Adrenal gland (tissue), 19 donors: ENCODE measurements at regions of chr20 and their contacts with region 1.

Region 1: GRCh38 chr20:32521780-32522525 is 63.2 kb downstream of the NOL4L start:
- DNase-seq: peak; percentile 56 to 87 (median 76)
- H3K4me3 ChIP-seq: no peak overlapping the region
- H3K27ac ChIP-seq: no peak overlapping the region
- H3K4me1 ChIP-seq: peaks cover 9 to 45% of the 10 kb centered on the region in 2 donors
- H3K27me3 ChIP-seq: no peaks in the 10 kb centered on the region
- CTCF ChIP-seq: peak; percentile 74 to 93 (median 88)
- POLR2A ChIP-seq: no peak

Region 2: DNA sequence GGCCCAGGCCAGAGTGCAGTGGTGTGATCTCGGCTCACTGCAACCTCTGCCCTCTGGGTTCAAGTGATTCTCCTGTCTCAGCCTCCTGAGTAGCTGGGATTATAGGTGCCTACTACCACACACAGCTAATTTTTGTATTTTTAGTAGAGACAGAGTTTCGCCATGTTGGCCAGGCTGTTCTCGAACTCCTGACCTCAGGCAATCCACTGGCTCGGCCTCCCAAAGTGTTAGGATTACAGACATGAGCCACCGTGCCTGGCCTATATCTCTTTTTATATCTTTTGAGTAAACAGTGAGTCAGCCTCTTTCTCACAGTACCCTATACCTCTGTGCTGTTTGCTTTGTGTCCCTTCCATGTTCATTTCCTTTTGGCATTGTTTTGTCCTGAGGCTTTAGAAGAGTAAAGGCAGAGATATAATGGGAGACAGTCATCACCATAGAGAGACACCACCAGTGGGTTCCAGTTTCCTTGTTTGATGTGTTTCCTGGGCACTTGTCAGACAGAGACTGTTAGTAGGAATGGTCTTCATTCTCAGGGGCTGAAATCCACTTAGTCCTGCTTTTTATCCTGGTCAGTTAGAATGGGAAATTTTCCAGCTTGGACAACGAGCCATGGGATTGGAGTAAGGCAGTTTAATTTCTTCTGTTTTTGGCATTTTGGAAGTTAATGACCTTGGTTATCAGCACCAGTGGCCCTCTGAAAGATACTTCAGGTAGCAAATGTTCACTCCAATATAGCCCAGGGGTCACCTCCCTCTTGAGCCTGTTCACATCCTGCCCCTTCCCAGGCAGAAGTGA is 196.0 kb before region 1 on chr20:
- intact Hi-C with region 1: no loop called
- DNase-seq: no peak
- H3K4me3 ChIP-seq: no peak overlapping the region
- H3K27ac ChIP-seq: no peak overlapping the region
- H3K4me1 ChIP-seq: no peaks in the 10 kb centered on the region
- H3K27me3 ChIP-seq: no peaks in the 10 kb centered on the region
- CTCF ChIP-seq: no peak
- POLR2A ChIP-seq: no peak

Region 3: GRCh38 chr20:32574296-32575226 is 52.6 kb after region 1 on chr20:
- intact Hi-C with region 1: no loop called
- DNase-seq: peak in 6 of 7 donors; percentile 77 to 85 (median 80)
- H3K4me3 ChIP-seq: no peak overlapping the region
- H3K27ac ChIP-seq: peak overlapping the region in 2 of 5 donors; percentile 50 to 68
- H3K4me1 ChIP-seq: peaks cover 0 to 31% of the 10 kb centered on the region in 2 donors
- H3K27me3 ChIP-seq: no peaks in the 10 kb centered on the region
- CTCF ChIP-seq: no peak
- POLR2A ChIP-seq: no peak

Region 4: GRCh38 chr20:32652739-32653526 is 131.0 kb after region 1 on chr20:
- intact Hi-C with region 1: loop called (anchors 2 kb)
- DNase-seq: peak; percentile 88 to 95 (median 93)
- H3K4me3 ChIP-seq: no peak overlapping the region
- H3K27ac ChIP-seq: peak overlapping the region in 1 of 5 donors; percentile 32
- H3K4me1 ChIP-seq: no peaks in the 10 kb centered on the region
- H3K27me3 ChIP-seq: no peaks in the 10 kb centered on the region
- CTCF ChIP-seq: peak; percentile 95 to 99 (median 98)
- POLR2A ChIP-seq: peak in 1 of 2 donors; percentile 4

Region 5: GRCh38 chr20:32762149-32762753 is 240.3 kb after region 1 on chr20 and contains the start of gene DNMT3B:
- intact Hi-C with region 1: no loop called
- DNase-seq: peak; percentile 65 to 85 (median 76)
- H3K4me3 ChIP-seq: peak within 1 kb of the TSS; percentile 56 to 100 (median 88)
- H3K27ac ChIP-seq: no peak within 1 kb of the TSS
- H3K4me1 ChIP-seq: peaks cover 14% of the 10 kb centered on the region in 2 donors
- H3K27me3 ChIP-seq: no peaks in the 10 kb centered on the region
- CTCF ChIP-seq: peak in 2 of 6 experiments; percentile 31 to 44
- POLR2A ChIP-seq: no peak
- total RNA-seq, gene DNMT3B: 0.12 to 1.8 (median 0.94) TPM in 8 of 9 donors, not detected in the other

Region 6: GRCh38 chr20:32779500-32780211 is 257.7 kb after region 1 on chr20:
- intact Hi-C with region 1: loop called in 1 of 2 experiments (anchors 10 kb)
- DNase-seq: no peak
- H3K4me3 ChIP-seq: no peak overlapping the region
- H3K27ac ChIP-seq: no peak overlapping the region
- H3K4me1 ChIP-seq: no peaks in the 10 kb centered on the region
- H3K27me3 ChIP-seq: no peaks in the 10 kb centered on the region
- CTCF ChIP-seq: no peak
- POLR2A ChIP-seq: no peak